ENCODE measurements at regions of chr1 and their contacts with region 1.

Region 1: DNA sequence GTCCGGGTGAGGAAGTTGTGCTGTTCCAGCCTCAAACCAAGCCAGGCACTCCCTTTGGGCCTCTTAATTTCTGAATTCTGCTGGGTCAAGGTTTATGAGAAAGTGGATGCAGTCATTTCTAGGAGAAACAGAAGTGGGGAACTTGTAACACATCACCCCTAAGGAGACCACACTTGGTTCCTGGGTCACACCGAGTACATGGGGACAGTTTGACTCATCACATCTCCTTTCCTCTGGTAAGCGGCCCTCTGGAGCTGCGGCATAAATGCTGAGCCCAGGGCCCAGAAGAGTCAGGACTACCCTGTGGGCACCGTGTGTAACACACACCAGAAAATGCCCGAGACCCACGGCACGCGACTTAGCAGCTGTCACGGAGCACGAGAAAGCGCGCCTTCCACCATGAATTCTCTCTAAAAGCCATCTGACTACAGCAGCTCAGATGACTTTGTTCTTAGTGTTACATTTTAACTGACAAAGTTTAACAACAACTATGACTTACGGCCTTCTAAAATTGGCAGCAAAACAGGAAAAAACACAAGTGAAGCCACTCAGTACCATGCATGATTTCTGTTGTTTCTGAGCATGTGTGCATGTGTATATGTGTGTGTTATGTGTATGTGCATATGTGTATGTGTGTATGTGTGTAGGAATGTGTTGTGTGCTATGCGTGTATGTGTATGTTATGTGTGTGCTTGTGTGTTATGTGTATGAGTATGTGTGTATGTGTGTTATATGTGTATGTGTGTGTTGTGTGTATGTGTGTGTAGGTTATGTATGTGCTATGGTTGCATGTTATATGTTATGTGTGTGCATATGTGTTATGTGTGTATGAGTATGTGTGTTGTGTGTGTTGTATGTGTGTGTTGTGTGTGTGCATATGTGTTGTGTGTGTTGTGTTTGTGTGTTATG is 50.8 kb downstream of the TOMM20 start:
- DNase-seq: no peak
- H3K4me3 ChIP-seq: no peak overlapping the region
- H3K27ac ChIP-seq: no peak overlapping the region
- H3K4me1 ChIP-seq: no peaks in the 10 kb centered on the region
- H3K27me3 ChIP-seq: no peaks in the 10 kb centered on the region
- CTCF ChIP-seq: no peak

Region 2: GRCh38 chr1:234599617-234600417 is 478.0 kb before region 1 on chr1:
- CTCF ChIA-PET with region 1: no interaction called
- POLR2A ChIA-PET with region 1: no interaction called
- intact Hi-C with region 1: loop called (anchors 5 kb)
- DNase-seq: peak; percentile 76
- H3K4me3 ChIP-seq: peak overlapping the region; percentile 54
- H3K27ac ChIP-seq: peak overlapping the region; percentile 86
- H3K4me1 ChIP-seq: peaks cover 57% of the 10 kb centered on the region
- H3K27me3 ChIP-seq: no peaks in the 10 kb centered on the region
- CTCF ChIP-seq: no peak

Region 3: DNA sequence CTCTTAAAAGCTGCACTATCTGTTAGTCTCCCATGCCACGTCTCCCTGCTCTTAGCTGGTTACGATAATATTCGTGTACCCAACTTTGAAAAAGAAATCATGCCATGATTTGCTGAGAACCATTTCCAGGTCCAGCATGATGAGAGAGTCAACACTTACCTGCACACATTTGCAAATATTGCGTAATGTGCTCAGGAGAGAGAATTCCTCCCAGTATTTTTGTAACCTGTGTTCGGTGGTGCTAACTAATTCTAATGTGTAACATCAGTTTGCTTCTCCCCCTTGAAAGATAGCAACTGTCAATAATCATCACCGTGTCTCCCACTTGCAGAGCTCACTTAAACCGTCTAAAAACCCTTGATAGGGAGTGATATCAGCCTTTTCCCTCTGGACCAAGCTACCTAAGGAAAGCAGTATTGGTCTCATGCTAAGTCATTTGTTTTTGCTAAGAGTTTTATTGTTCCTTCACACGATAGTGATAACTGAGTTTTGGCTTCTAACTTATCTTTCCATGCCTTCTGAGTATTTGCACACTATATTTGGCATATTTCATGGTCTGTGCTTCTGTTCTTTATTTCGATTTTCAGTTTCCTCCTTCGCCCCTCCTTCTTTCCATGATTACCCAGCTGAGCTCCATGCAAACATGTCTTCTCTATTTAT is 406.7 kb before region 1 on chr1:
- CTCF ChIA-PET with region 1: no interaction called
- POLR2A ChIA-PET with region 1: no interaction called
- intact Hi-C with region 1: no loop called
- DNase-seq: no peak
- H3K4me3 ChIP-seq: no peak overlapping the region
- H3K27ac ChIP-seq: no peak overlapping the region
- H3K4me1 ChIP-seq: no peaks in the 10 kb centered on the region
- H3K27me3 ChIP-seq: no peaks in the 10 kb centered on the region
- CTCF ChIP-seq: no peak

Measured in A673 (cell line).